ENCODE measurements at regions of chr3 and their contacts with region 1.

Region 1: GRCh38 chr3:49339945-49340800 is at the start of gene USP4:
- DNase-seq: peak; percentile 94
- H3K4me3 ChIP-seq: peak within 1 kb of the TSS; percentile 63 to 89 (median 68)
- H3K27ac ChIP-seq: peak within 1 kb of the TSS; percentile 88 to 95 (median 93)
- H3K4me1 ChIP-seq: peaks cover 0 to 26% (median 21%) of the 10 kb centered on the region in 4 donors
- H3K27me3 ChIP-seq: no peaks in the 10 kb centered on the region
- CTCF ChIP-seq: peak; percentile 6 to 15 (median 13)
- EP300 ChIP-seq: peak in 1 of 4 donors; percentile 2
- POLR2A ChIP-seq: peak in 1 of 2 donors; percentile 45
- total RNA-seq, gene USP4: 16.3 to 28.2 (median 20.5) TPM

Region 2: DNA sequence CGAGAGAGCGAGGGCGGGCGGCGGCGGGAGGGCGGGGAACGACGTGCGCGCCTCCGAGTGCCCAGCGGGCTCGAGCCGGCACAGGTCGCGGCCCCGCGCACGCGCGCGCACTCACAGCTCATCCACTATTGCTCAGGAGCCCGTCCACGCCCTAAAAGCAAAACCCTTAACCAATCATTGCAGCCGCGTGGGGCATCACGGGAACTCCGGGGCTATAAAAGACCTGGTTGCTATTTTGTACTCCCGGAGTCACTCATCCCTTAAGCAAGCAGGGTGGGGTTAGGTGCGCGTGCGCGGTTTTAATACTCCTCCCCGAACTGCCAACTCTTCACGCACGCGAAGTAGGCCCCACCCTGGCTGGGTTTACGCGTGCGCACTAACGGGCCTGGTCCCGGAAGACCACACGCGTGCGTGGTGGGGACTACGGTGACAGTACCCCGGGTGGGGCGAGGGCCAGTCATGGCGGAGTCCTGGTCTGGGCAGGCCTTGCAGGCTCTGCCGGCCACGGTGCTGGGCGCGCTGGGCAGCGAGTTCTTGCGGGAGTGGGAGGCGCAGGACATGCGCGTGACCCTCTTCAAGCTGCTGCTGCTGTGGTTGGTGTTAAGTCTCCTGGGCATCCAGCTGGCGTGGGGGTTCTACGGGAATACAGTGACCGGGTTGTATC is 71.9 kb after region 1 on chr3 and contains the starts of genes RHOA and TCTA:
- intact Hi-C with region 1: loop called (anchors 5 kb)
- DNase-seq: peak; percentile 100
- H3K4me3 ChIP-seq: peak within 1 kb of the TSS; percentile 69 to 95 (median 74)
- H3K27ac ChIP-seq: peak within 1 kb of the TSS; percentile 95 to 99 (median 98)
- H3K4me1 ChIP-seq: peaks cover 0 to 73% (median 50%) of the 10 kb centered on the region in 4 donors
- H3K27me3 ChIP-seq: no peaks in the 10 kb centered on the region
- CTCF ChIP-seq: no peak
- EP300 ChIP-seq: peak in 1 of 4 donors; percentile 80
- POLR2A ChIP-seq: peak; percentile 93 to 96
- total RNA-seq, gene RHOA: 369 to 440 (median 416) TPM
- total RNA-seq, gene TCTA: 15.1 to 25.0 (median 16.5) TPM

Region 3: GRCh38 chr3:49454458-49454857 is 114.3 kb after region 1 on chr3:
- intact Hi-C with region 1: loop called (anchors 1 kb)
- DNase-seq: no peak
- H3K4me3 ChIP-seq: no peak overlapping the region
- H3K27ac ChIP-seq: no peak overlapping the region
- H3K4me1 ChIP-seq: peaks cover 0 to 7% (median 0%) of the 10 kb centered on the region in 4 donors
- H3K27me3 ChIP-seq: no peaks in the 10 kb centered on the region
- CTCF ChIP-seq: no peak
- EP300 ChIP-seq: no peak
- POLR2A ChIP-seq: no peak